GM12878 (cell line): ENCODE measurements at regions of chr1 and their contacts with region 1.

Region 1: GRCh38 chr1:235971571-235972310 is 93.1 kb downstream of the NID1 start:
- DNase-seq: peak; percentile 84
- ATAC-seq: peak; percentile 97
- H3K4me3 ChIP-seq: peak overlapping the region; percentile 58
- H3K27ac ChIP-seq: peak overlapping the region; percentile 80
- H3K4me1 ChIP-seq: peaks cover 7% of the 10 kb centered on the region
- H3K27me3 ChIP-seq: no peaks in the 10 kb centered on the region
- CTCF ChIP-seq: peak; percentile 87 to 95 (median 89); a peak in 5 of 6 replicates
- EP300 ChIP-seq: no peak
- POLR2A ChIP-seq: peak; percentile 75
- RAD21 ChIP-seq: peak; percentile 98

Region 2: GRCh38 chr1:235504496-235505222 is 467.1 kb before region 1 on chr1:
- CTCF ChIA-PET with region 1: interaction called, 12 read pairs
- POLR2A ChIA-PET with region 1: interaction called, 5 read pairs
- RAD21 ChIA-PET with region 1: interaction called, 20 read pairs
- SMC1A ChIA-PET with region 1: interaction called, 7 read pairs
- in situ Hi-C with region 1: no loop called
- intact Hi-C with region 1: no loop called
- DNase-seq: peak; percentile 96
- ATAC-seq: peak; percentile 86
- H3K4me3 ChIP-seq: peak overlapping the region; percentile 92
- H3K27ac ChIP-seq: peak overlapping the region; percentile 95
- H3K4me1 ChIP-seq: peaks cover 6% of the 10 kb centered on the region
- H3K27me3 ChIP-seq: no peaks in the 10 kb centered on the region
- CTCF ChIP-seq: peak; percentile 82 to 91 (median 86)
- EP300 ChIP-seq: peak in 1 of 2 experiments; percentile 51; a peak in 1 of 4 replicates
- POLR2A ChIP-seq: peak; percentile 86
- RAD21 ChIP-seq: peak; percentile 48; the same call in 1 of the 2 replicates

Region 3: GRCh38 chr1:235783148-235783776 is 188.5 kb before region 1 on chr1:
- CTCF ChIA-PET with region 1: interaction called, 82 read pairs
- POLR2A ChIA-PET with region 1: no interaction called
- RAD21 ChIA-PET with region 1: interaction called, 43 read pairs
- SMC1A ChIA-PET with region 1: interaction called, 33 read pairs
- in situ Hi-C with region 1: no loop called
- intact Hi-C with region 1: loop called (anchors 1 kb)
- DNase-seq: no peak
- ATAC-seq: peak; percentile 57
- H3K4me3 ChIP-seq: no peak overlapping the region
- H3K27ac ChIP-seq: no peak overlapping the region
- H3K4me1 ChIP-seq: no peaks in the 10 kb centered on the region
- H3K27me3 ChIP-seq: no peaks in the 10 kb centered on the region
- CTCF ChIP-seq: peak; percentile 29 to 52 (median 32); a peak in 3 of 6 replicates
- EP300 ChIP-seq: no peak
- POLR2A ChIP-seq: no peak
- RAD21 ChIP-seq: peak; percentile 77

Region 4: GRCh38 chr1:235838021-235838420 is 133.7 kb before region 1 on chr1:
- CTCF ChIA-PET with region 1: interaction called, 90 read pairs
- POLR2A ChIA-PET with region 1: interaction called, 5 read pairs
- RAD21 ChIA-PET with region 1: interaction called, 67 read pairs
- SMC1A ChIA-PET with region 1: interaction called, 56 read pairs
- in situ Hi-C with region 1: no loop called
- intact Hi-C with region 1: loop called (anchors 2 kb)
- DNase-seq: no peak
- ATAC-seq: peak; percentile 56
- H3K4me3 ChIP-seq: no peak overlapping the region
- H3K27ac ChIP-seq: no peak overlapping the region
- H3K4me1 ChIP-seq: peaks cover 7% of the 10 kb centered on the region
- H3K27me3 ChIP-seq: no peaks in the 10 kb centered on the region
- CTCF ChIP-seq: no peak
- EP300 ChIP-seq: no peak
- POLR2A ChIP-seq: no peak
- RAD21 ChIP-seq: no peak

Region 5: GRCh38 chr1:235883261-235883927 is 88.3 kb before region 1 on chr1:
- CTCF ChIA-PET with region 1: interaction called, 12 read pairs
- POLR2A ChIA-PET with region 1: interaction called, 4 read pairs
- RAD21 ChIA-PET with region 1: interaction called, 10 read pairs
- SMC1A ChIA-PET with region 1: interaction called, 16 read pairs
- in situ Hi-C with region 1: no loop called
- intact Hi-C with region 1: loop called (anchors 2 kb)
- DNase-seq: peak; percentile 76
- ATAC-seq: peak; percentile 50
- H3K4me3 ChIP-seq: peak overlapping the region; percentile 33
- H3K27ac ChIP-seq: peak overlapping the region; percentile 71
- H3K4me1 ChIP-seq: peaks cover 36% of the 10 kb centered on the region
- H3K27me3 ChIP-seq: no peaks in the 10 kb centered on the region
- CTCF ChIP-seq: no peak
- EP300 ChIP-seq: no peak
- POLR2A ChIP-seq: no peak
- RAD21 ChIP-seq: no peak

Region 6: GRCh38 chr1:235946571-235946981 is 25.2 kb before region 1 on chr1:
- CTCF ChIA-PET with region 1: interaction called, 31 read pairs
- POLR2A ChIA-PET with region 1: interaction called, 5 read pairs
- RAD21 ChIA-PET with region 1: interaction called, 14 read pairs
- SMC1A ChIA-PET with region 1: interaction called, 131 read pairs
- in situ Hi-C with region 1: no loop called
- intact Hi-C with region 1: no loop called
- DNase-seq: no peak
- ATAC-seq: peak; percentile 86
- H3K4me3 ChIP-seq: no peak overlapping the region
- H3K27ac ChIP-seq: no peak overlapping the region
- H3K4me1 ChIP-seq: peaks cover 17% of the 10 kb centered on the region
- H3K27me3 ChIP-seq: no peaks in the 10 kb centered on the region
- CTCF ChIP-seq: peak; percentile 42 to 58 (median 55); a peak in 5 of 6 replicates
- EP300 ChIP-seq: no peak
- POLR2A ChIP-seq: no peak
- RAD21 ChIP-seq: peak; percentile 73

Region 7: GRCh38 chr1:236064674-236065508 is 93.2 kb after region 1 on chr1 and contains the start of gene NID1:
- CTCF ChIA-PET with region 1: interaction called, 16 read pairs
- POLR2A ChIA-PET with region 1: interaction called, 7 read pairs
- RAD21 ChIA-PET with region 1: interaction called, 13 read pairs
- SMC1A ChIA-PET with region 1: interaction called, 13 read pairs
- in situ Hi-C with region 1: no loop called
- intact Hi-C with region 1: no loop called
- DNase-seq: no peak
- ATAC-seq: peak; percentile 67
- H3K4me3 ChIP-seq: peak within 1 kb of the TSS; percentile 70
- H3K27ac ChIP-seq: peak within 1 kb of the TSS; percentile 41
- H3K4me1 ChIP-seq: peaks cover 12% of the 10 kb centered on the region
- H3K27me3 ChIP-seq: no peaks in the 10 kb centered on the region
- CTCF ChIP-seq: peak in 2 of 3 experiments; percentile 2 to 25; a peak in 2 of 6 replicates
- EP300 ChIP-seq: no peak
- POLR2A ChIP-seq: peak; percentile 11; the same call in 1 of the 2 replicates
- RAD21 ChIP-seq: no peak
- polyA plus RNA-seq, gene NID1: 4.2 to 4.9 TPM

Region 8: GRCh38 chr1:236137285-236137852 is 165.6 kb after region 1 on chr1:
- CTCF ChIA-PET with region 1: no interaction called
- POLR2A ChIA-PET with region 1: no interaction called
- RAD21 ChIA-PET with region 1: no interaction called
- SMC1A ChIA-PET with region 1: no interaction called
- in situ Hi-C with region 1: no loop called
- intact Hi-C with region 1: no loop called
- DNase-seq: no peak
- ATAC-seq: peak; percentile 10; the same call in 2 of the 3 replicates
- H3K4me3 ChIP-seq: no peak overlapping the region
- H3K27ac ChIP-seq: no peak overlapping the region
- H3K4me1 ChIP-seq: peaks cover 11% of the 10 kb centered on the region
- H3K27me3 ChIP-seq: peaks cover 1 to 13% of the 10 kb centered on the region in 2 experiments
- CTCF ChIP-seq: peak; percentile 25 to 47 (median 29); a peak in 3 of 6 replicates
- EP300 ChIP-seq: no peak
- POLR2A ChIP-seq: no peak
- RAD21 ChIP-seq: peak; percentile 62